Activated naive CD4-positive, alpha-beta T cell treated with anti-CD3 and anti-CD28 coated beads, Interleukin-2, amount 10 ng/mL, durations not matched to agents 7 days and 5 days (primary cell): ENCODE measurements at regions of chr1 and their contacts with region 1.

Region 1: DNA sequence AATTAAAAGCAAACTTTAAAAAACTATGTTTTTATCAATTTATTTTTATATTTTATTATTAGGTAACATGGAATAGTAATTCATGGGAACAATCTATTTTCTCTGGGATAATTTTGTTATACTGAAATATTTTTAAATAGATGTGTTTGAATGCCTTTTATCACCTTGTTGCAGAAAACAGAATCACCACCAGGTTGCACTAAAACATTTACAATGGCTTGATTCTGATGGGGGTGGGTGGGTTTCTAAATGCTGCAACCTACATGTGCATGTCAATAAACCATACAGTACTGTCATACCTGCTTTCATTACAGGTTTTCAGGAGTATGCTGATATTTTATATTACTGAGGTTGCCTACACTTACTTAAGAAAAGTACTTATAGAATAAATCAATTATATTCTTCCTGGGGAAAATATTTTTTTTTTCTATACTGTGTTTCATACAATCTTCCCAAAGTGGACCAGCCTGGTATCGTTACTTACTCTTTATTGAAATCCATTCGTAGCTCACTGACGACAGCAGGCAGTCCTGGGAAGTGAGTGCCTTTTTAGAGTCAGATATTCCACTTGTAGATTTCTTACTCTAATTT is 132.8 kb downstream of the PTPRC start:
- DNase-seq: no peak
- H3K4me3 Mint-ChIP-seq: no peak overlapping the region
- H3K27ac Mint-ChIP-seq: no peak overlapping the region
- H3K4me1 Mint-ChIP-seq: peaks cover 6% of the 10 kb centered on the region
- H3K27me3 Mint-ChIP-seq: peaks cover 8% of the 10 kb centered on the region

Region 2: DNA sequence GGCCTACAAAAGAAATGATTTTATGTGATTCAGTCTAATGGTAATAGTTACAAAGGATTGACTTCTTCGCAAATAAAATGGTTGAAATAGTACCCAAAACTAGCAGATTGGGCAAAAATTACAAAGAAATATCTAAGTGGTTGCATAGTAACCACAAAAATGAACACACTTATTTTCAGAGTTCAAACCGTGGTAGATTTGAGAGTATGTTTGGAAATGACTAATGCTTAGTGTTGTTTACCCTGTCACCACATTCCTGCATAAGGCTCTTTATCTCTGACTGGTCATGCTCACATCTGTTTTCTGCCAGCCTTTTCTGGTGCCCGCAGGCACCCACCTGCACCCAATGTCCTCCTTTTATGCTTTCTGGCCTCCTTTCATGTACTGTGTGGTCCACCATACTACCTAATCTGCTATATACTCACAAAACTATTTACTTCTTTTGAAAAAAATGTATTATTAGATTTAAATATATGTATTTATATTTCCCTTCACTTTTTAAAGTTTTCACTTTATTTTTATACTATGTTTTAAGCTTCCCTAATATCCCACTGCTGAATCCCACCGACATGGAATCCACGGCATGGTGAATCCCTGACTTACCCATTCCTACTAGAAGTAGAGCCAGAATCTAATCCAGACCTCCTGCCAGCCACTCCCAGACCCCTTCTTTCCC is 102.5 kb before region 1 on chr1:
- CTCF ChIA-PET with region 1: no interaction called
- DNase-seq: peak; percentile 54
- H3K4me3 Mint-ChIP-seq: peak overlapping the region; percentile 55
- H3K27ac Mint-ChIP-seq: peak overlapping the region; percentile 89
- H3K4me1 Mint-ChIP-seq: peaks cover 89% of the 10 kb centered on the region
- H3K27me3 Mint-ChIP-seq: no peaks in the 10 kb centered on the region

Region 3: DNA sequence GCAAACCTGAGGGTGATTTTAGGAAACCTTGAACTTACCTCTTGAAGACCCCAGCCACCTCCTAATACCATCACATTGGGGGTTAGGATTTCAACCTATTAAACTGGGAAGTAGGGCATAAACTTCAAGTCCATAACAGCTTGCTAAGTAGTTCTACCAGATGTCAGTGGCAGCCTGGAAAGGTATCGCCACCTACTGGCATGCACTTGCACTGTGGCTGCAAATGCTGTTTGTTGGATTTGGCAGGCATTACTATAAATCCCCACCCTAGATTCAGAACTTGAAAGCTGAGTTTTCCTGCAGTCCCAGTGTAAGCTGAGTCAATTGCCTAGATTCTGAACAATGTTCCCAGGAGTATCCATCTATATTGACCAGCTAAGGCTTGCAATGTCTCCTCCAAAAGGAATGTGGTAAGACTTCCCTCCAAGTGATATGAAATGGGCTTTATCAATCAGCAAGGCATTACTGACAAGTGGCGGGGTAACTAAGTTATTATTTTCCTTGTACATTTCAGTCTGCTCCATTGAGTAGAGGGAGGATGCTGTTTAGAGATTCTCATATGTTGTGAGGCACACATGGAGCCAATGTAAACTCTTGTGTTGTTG is 341.7 kb after region 1 on chr1:
- CTCF ChIA-PET with region 1: interaction called, 22 read pairs
- DNase-seq: peak; percentile 80
- H3K4me3 Mint-ChIP-seq: no peak overlapping the region
- H3K27ac Mint-ChIP-seq: peak overlapping the region; percentile 26
- H3K4me1 Mint-ChIP-seq: peaks cover 10% of the 10 kb centered on the region
- H3K27me3 Mint-ChIP-seq: peaks cover 3% of the 10 kb centered on the region

Region 4: GRCh38 chr1:199243423-199244061 is 471.9 kb after region 1 on chr1:
- CTCF ChIA-PET with region 1: interaction called, 11 read pairs
- DNase-seq: peak; percentile 79
- H3K4me3 Mint-ChIP-seq: no peak overlapping the region
- H3K27ac Mint-ChIP-seq: no peak overlapping the region
- H3K4me1 Mint-ChIP-seq: no peaks in the 10 kb centered on the region
- H3K27me3 Mint-ChIP-seq: peaks cover 11% of the 10 kb centered on the region